CD4-positive, alpha-beta memory T cell (primary cell): ENCODE measurements at regions of chr1 and their contacts with region 1.

Region 1: DNA sequence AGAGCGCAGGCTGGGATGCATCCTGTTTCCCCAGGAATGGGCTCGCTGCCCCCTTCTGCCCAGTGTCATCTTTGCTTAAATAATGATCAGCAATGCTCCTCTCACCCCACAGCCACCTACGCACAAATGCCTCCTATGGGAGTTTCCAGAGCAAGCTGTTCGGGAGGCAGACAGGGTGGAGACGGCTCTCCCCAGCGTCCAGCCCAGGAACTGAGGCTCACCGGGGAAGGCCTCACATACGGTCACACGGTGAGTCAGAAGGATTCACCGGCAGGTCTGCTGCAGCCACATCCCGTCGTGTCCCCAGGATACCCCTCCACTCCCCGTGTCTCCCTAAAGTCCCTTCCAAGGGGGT is 40.3 kb upstream of the RUNX3 start:
- DNase-seq: no peak
- H3K4me3 ChIP-seq: no peak overlapping the region
- H3K4me3 Mint-ChIP-seq: no peak overlapping the region
- H3K27ac ChIP-seq: no peak overlapping the region
- H3K27ac Mint-ChIP-seq: peak overlapping the region in 2 of 7 donors; percentile 70 to 84
- H3K4me1 ChIP-seq: peaks cover 32% of the 10 kb centered on the region
- H3K4me1 Mint-ChIP-seq: peaks cover 18 to 55% (median 32%) of the 10 kb centered on the region in 4 donors
- H3K27me3 ChIP-seq: no peaks in the 10 kb centered on the region
- H3K27me3 Mint-ChIP-seq: no peaks in the 10 kb centered on the region

Region 2: GRCh38 chr1:24855474-24855873 is 114.9 kb before region 1 on chr1:
- CTCF ChIA-PET with region 1: no interaction called
- POLR2A ChIA-PET with region 1: no interaction called
- intact Hi-C with region 1: no loop called
- DNase-seq: no peak
- H3K4me3 ChIP-seq: no peak overlapping the region
- H3K4me3 Mint-ChIP-seq: no peak overlapping the region
- H3K27ac ChIP-seq: no peak overlapping the region
- H3K27ac Mint-ChIP-seq: no peak overlapping the region
- H3K4me1 ChIP-seq: no peaks in the 10 kb centered on the region
- H3K4me1 Mint-ChIP-seq: peaks cover 0 to 10% (median 0%) of the 10 kb centered on the region in 4 donors
- H3K27me3 ChIP-seq: no peaks in the 10 kb centered on the region
- H3K27me3 Mint-ChIP-seq: no peaks in the 10 kb centered on the region

Region 3: DNA sequence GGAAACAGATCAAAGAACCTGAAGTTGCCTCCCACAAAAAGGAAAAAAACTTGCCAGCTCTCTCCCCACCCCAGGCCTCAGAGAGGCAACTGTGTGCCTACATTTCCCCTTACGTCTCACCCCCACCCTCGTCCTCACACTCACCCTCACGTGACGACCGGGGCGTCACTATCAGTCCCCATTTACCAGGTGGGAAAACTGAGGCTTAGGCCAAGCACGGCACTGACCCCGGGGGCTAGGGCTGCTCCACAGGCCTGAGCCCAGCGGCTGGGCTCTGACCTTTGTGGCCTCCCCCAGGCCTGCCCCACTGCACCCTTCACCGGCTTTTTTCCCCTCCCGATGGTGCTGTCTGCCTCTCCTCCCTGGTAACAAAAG is 11.2 kb after region 1 on chr1:
- CTCF ChIA-PET with region 1: interaction called, 6 read pairs
- POLR2A ChIA-PET with region 1: interaction called, 35 read pairs
- intact Hi-C with region 1: no loop called
- DNase-seq: no peak
- H3K4me3 ChIP-seq: no peak overlapping the region
- H3K4me3 Mint-ChIP-seq: peak overlapping the region in 7 of 8 donors; percentile 15 to 67 (median 52)
- H3K27ac ChIP-seq: no peak overlapping the region
- H3K27ac Mint-ChIP-seq: peak overlapping the region in 5 of 7 donors; percentile 44 to 93 (median 83)
- H3K4me1 ChIP-seq: peaks cover 72% of the 10 kb centered on the region
- H3K4me1 Mint-ChIP-seq: peaks cover 49 to 82% (median 65%) of the 10 kb centered on the region in 4 donors
- H3K27me3 ChIP-seq: no peaks in the 10 kb centered on the region
- H3K27me3 Mint-ChIP-seq: no peaks in the 10 kb centered on the region

Region 4: DNA sequence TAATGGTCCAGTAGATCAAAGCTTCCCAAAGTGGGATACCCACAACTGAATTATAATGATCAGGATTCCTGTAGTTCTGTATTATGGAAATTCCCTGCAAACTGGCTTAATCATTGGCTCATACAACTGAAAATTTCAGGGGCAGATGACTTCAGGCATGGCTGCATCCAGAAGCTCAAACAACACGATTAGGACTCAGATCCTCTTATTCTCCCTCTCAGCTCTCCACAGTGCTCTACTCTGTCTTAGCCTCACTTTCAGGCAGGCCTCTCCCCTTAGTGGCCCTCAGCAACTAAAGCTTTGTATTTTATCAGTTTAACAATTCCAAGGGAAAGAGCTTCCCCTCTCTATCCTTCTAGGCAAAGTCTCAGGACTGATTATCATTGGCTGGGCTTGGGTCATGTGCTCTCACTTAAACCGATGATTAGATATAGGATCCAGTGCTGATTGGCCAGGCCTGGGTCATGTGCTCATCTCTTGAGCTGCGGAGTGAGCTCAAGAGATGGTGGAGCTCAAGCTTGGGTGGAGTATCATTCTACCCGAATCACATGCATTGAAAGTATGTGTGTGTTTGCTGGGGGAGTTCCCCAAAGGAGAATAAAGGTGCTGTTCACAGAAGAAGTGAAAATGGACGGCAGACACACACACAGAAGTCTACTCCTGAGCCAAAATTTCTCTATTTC is 17.6 kb after region 1 on chr1:
- CTCF ChIA-PET with region 1: interaction called, 10 read pairs
- POLR2A ChIA-PET with region 1: interaction called, 35 read pairs
- intact Hi-C with region 1: no loop called
- DNase-seq: no peak
- H3K4me3 ChIP-seq: no peak overlapping the region
- H3K4me3 Mint-ChIP-seq: peak overlapping the region in 1 of 8 donors; percentile 36
- H3K27ac ChIP-seq: no peak overlapping the region
- H3K27ac Mint-ChIP-seq: peak overlapping the region in 4 of 7 donors; percentile 31 to 89 (median 60)
- H3K4me1 ChIP-seq: peaks cover 90% of the 10 kb centered on the region
- H3K4me1 Mint-ChIP-seq: peaks cover 65 to 91% (median 77%) of the 10 kb centered on the region in 4 donors
- H3K27me3 ChIP-seq: no peaks in the 10 kb centered on the region
- H3K27me3 Mint-ChIP-seq: peaks cover 0 to 2% of the 10 kb centered on the region in 2 donors